ENCODE measurements at regions of chr12 and their contacts with region 1.

Region 1: DNA sequence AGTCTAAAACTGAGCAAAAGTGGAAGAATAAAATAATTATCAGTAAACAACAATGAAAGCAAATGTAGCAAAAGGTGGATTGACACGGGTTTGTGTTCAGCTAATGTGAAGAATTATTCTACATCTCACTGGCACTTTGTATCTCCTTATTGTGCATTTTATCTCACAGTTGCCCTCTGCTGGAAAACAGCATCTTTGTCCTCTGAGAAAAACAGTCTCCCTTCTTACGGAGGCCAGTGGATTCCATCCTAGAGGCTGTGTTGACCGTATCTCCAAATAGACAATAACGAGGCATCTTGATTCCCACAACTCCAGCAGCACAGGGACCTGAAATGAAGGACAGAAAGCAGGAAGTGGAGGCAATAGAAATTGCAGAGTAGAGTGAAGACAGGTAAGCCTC is 51.3 kb upstream of the PLBD1 start:
- DNase-seq: no peak
- ATAC-seq: peak; percentile 73

Region 2: DNA sequence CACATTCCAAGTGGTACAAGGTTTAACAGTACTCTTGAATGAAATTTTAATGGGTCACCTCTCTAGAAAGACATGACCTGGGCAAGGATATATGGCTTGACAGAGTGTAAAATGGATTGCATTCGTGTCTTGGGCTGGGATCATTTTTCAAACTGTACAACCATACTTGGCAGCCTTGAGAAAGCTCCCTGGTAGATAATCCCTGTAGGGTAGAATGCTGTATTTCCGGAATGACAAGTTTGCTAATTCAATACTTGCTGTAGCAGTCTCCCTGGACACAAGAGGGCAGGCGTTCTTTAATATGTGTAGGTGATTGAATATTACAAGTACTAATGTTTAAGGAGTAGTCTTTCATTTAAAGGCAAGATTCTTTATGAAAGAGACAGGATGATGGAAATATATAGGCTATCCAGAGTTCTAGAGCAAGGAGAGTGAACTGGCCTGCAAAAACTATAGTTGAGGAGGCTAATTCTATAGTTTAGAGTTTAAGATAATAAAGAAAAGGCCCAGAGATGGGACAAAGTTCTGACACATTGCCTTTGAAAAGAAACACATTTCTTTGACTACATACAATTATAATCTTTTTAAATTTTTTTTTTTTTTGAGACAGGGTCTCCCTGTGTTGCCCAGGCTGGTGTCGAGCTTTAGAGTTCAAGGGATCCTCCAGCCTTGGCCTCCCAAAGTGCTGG is 104.7 kb before region 1 on chr12:
- intact Hi-C with region 1: loop called (anchors 5 kb)
- DNase-seq: no peak
- ATAC-seq: peak; percentile 77